CD14-positive monocyte (primary cell): ENCODE measurements at regions of chr5 and their contacts with region 1.

Region 1: GRCh38 chr5:36241631-36242533 is at the start of gene NADK2:
- DNase-seq: peak; percentile 92 to 94 (median 94)
- H3K4me3 ChIP-seq: peak within 1 kb of the TSS; percentile 59 to 89 (median 75)
- H3K4me3 Mint-ChIP-seq: peak within 1 kb of the TSS; percentile 89 to 95
- H3K27ac ChIP-seq: peak within 1 kb of the TSS; percentile 78 to 85
- H3K27ac Mint-ChIP-seq: peak within 1 kb of the TSS; percentile 82 to 96 (median 89)
- H3K4me1 ChIP-seq: peaks cover 13 to 26% of the 10 kb centered on the region in 2 donors
- H3K4me1 Mint-ChIP-seq: peaks cover 28% of the 10 kb centered on the region
- H3K27me3 ChIP-seq: no peaks in the 10 kb centered on the region
- H3K27me3 Mint-ChIP-seq: peaks cover 0 to 4% (median 2%) of the 10 kb centered on the region in 3 donors
- CTCF ChIP-seq: peak; percentile 68
- polyA plus RNA-seq, gene NADK2: 2.6 to 5.9 (median 3.3) TPM

Region 2: GRCh38 chr5:36151434-36152323 is 90.2 kb before region 1 on chr5 and contains the starts of genes LMBRD2 and SKP2:
- intact Hi-C with region 1: loop called (anchors 5 kb)
- DNase-seq: peak; percentile 92 to 96 (median 94)
- H3K4me3 ChIP-seq: peak within 1 kb of the TSS; percentile 88 to 100 (median 92)
- H3K4me3 Mint-ChIP-seq: peak within 1 kb of the TSS; percentile 93 to 96
- H3K27ac ChIP-seq: peak within 1 kb of the TSS; percentile 46 to 86
- H3K27ac Mint-ChIP-seq: peak within 1 kb of the TSS; percentile 85 to 94 (median 91)
- H3K4me1 ChIP-seq: peaks cover 19 to 29% of the 10 kb centered on the region in 2 donors
- H3K4me1 Mint-ChIP-seq: peaks cover 34% of the 10 kb centered on the region
- H3K27me3 ChIP-seq: no peaks in the 10 kb centered on the region
- H3K27me3 Mint-ChIP-seq: no peaks in the 10 kb centered on the region
- CTCF ChIP-seq: no peak
- polyA plus RNA-seq, gene LMBRD2: 2.1 to 6.4 (median 2.3) TPM
- polyA plus RNA-seq, gene SKP2: 14.4 to 18.0 (median 15.5) TPM